ENCODE measurements at regions of chr12 and their contacts with region 1.

Region 1: DNA sequence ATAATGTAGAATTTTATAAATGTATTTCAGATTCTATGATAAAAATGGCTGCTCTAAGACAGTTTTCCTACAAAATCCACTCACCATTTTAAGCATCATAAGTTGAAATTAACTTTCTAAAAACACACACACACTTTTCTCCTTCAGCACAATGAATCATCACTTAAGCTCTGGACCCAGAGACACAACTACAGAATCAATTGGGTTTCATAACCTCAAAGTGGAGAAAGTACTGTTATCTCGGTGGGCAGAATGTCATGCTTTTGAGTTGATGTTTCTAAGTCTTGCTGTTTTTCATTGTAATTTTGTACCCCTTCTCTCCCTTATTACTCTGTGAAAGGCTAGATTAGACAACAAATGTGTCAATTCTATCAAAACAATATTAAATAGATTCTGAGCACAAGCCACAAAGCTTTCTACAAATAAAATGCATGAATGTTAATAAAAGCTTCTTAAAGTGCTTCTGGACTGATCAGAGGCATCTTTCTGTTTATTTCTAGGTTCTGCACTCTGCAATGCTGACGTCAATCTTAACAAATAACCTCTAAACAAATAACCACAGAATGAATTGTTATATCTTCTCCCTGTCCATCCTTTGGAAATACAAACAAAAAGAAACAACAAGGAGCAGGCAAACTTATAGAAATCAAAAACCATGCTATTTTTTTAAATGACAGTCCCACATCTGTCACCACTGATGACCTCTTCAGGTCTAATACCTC is 8.2 kb downstream of the IPO8 start:
- DNase-seq: peak; percentile 8
- ATAC-seq: no peak
- H3K4me3 ChIP-seq: no peak overlapping the region
- H3K27ac ChIP-seq: peak overlapping the region; percentile 36
- H3K4me1 ChIP-seq: peaks cover 26% of the 10 kb centered on the region
- H3K27me3 ChIP-seq: no peaks in the 10 kb centered on the region; a peak in 1 of 5 replicates
- CTCF ChIP-seq: no peak
- EP300 ChIP-seq: no peak
- POLR2A ChIP-seq: no peak
- RAD21 ChIP-seq: no peak

Region 2: DNA sequence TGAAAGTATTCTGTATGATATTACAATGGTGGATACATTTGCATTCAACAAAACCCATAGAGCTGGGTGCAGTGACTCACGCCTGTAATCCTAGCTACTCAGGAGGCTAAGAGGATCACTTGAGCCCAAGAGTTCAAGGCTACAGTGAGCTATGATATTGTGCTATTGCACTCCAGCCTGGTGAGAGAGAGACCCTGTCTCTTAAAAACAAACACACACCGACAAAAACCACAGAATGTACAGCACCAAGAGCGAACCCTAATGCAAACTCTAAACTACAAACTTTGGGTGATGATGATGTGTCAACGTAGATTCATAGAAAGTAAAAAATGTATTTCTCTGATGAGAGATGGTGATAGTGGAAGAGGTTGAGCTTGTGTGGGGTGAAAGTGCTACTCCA is 58.8 kb after region 1 on chr12:
- CTCF ChIA-PET with region 1: no interaction called
- POLR2A ChIA-PET with region 1: no interaction called
- in situ Hi-C with region 1: no loop called
- intact Hi-C with region 1: loop called (anchors 5 kb)
- DNase-seq: peak; percentile 87
- ATAC-seq: peak; percentile 100
- H3K4me3 ChIP-seq: no peak overlapping the region; a peak in 1 of 6 replicates
- H3K27ac ChIP-seq: peak overlapping the region; percentile 36
- H3K4me1 ChIP-seq: peaks cover 50% of the 10 kb centered on the region
- H3K27me3 ChIP-seq: no peaks in the 10 kb centered on the region
- CTCF ChIP-seq: no peak
- EP300 ChIP-seq: peak in 1 of 2 experiments; percentile 74; a peak in 2 of 4 replicates
- POLR2A ChIP-seq: no peak
- RAD21 ChIP-seq: no peak; the same call in 1 of the 2 replicates

Measured in HepG2 (cell line).